HCT116 (cell line): ENCODE measurements at regions of chr1 and their contacts with region 1.

Region 1: DNA sequence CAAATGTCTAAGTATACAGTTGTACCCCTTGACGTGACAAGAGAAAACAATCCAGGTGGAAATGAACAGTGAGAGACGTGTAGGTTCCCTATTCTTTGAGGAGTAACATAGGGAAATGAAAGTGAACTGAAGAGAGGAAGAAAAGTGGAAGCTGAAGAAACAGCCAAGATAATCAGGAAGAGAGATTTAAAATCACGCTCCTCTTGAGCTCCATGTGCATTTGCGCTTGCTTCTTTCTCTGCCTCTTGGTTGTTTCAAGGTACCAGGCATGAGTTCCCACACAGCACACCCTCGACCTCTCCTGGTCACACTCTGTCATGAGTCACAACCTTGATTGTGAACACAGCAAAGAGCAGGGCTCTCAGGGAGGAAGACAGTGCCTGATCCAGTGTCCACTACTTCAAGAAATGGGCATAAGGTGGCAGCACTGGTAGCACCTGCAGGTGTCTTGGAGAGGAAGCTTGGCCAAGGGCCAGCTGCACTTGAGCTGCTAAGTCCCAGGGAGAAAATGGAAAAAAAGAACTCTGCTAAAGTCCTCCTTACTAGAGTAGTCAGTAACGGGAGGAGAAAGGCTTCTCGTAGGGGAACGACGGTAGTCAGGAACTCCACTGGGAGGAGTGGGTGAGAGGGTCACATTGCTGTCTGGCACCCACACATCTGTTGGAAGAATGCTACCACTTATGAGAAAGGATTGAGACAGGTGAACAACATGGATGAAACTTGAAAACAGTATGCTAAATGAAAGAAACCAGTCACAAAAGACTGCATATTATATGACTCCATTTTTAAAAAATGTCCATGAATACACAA is 18.3 kb upstream of the ARID1A start:
- DNase-seq: peak; percentile 94
- ATAC-seq: peak; percentile 100
- H3K4me3 ChIP-seq: peak overlapping the region in 1 of 2 experiments; percentile 24; a peak in 2 of 4 replicates
- H3K27ac ChIP-seq: no peak overlapping the region
- H3K4me1 ChIP-seq: peaks cover 0 to 13% of the 10 kb centered on the region in 2 experiments; a peak in 2 of 4 replicates
- H3K27me3 ChIP-seq: no peaks in the 10 kb centered on the region
- CTCF ChIP-seq: peak; percentile 83 to 97 (median 86)
- POLR2A ChIP-seq: no peak
- RAD21 ChIP-seq: peak; percentile 91

Region 2: GRCh38 chr1:26666855-26667254 is 10.7 kb before region 1 on chr1:
- CTCF ChIA-PET with region 1: interaction called, 12 read pairs
- POLR2A ChIA-PET with region 1: interaction called, 6 read pairs
- RAD21 ChIA-PET with region 1: no interaction called
- intact Hi-C with region 1: no loop called
- DNase-seq: no peak
- ATAC-seq: no peak
- H3K4me3 ChIP-seq: no peak overlapping the region
- H3K27ac ChIP-seq: no peak overlapping the region
- H3K4me1 ChIP-seq: no peaks in the 10 kb centered on the region; a peak in 1 of 4 replicates
- H3K27me3 ChIP-seq: no peaks in the 10 kb centered on the region
- CTCF ChIP-seq: no peak
- POLR2A ChIP-seq: no peak
- RAD21 ChIP-seq: no peak

Region 3: GRCh38 chr1:26695356-26696118 is 18.0 kb after region 1 on chr1 and contains the start of gene ARID1A:
- CTCF ChIA-PET with region 1: interaction called, 33 read pairs
- POLR2A ChIA-PET with region 1: interaction called, 21 read pairs
- RAD21 ChIA-PET with region 1: interaction called in 1 of 2 experiments, 4 read pairs
- intact Hi-C with region 1: no loop called
- DNase-seq: peak; percentile 92
- ATAC-seq: peak; percentile 51
- H3K4me3 ChIP-seq: peak within 1 kb of the TSS; percentile 60 to 64
- H3K27ac ChIP-seq: peak within 1 kb of the TSS; percentile 94
- H3K4me1 ChIP-seq: peaks cover 27 to 76% of the 10 kb centered on the region in 2 experiments
- H3K27me3 ChIP-seq: no peaks in the 10 kb centered on the region
- CTCF ChIP-seq: no peak
- POLR2A ChIP-seq: no peak
- RAD21 ChIP-seq: no peak
- total RNA-seq, gene ARID1A: 62.8 TPM

Region 4: GRCh38 chr1:27218736-27219135 is 541.2 kb after region 1 on chr1:
- CTCF ChIA-PET with region 1: no interaction called
- POLR2A ChIA-PET with region 1: no interaction called
- RAD21 ChIA-PET with region 1: no interaction called
- intact Hi-C with region 1: no loop called
- DNase-seq: no peak
- ATAC-seq: no peak
- H3K4me3 ChIP-seq: no peak overlapping the region
- H3K27ac ChIP-seq: no peak overlapping the region
- H3K4me1 ChIP-seq: no peaks in the 10 kb centered on the region
- H3K27me3 ChIP-seq: no peaks in the 10 kb centered on the region
- CTCF ChIP-seq: no peak
- POLR2A ChIP-seq: no peak
- RAD21 ChIP-seq: no peak